ENCODE measurements at regions of chr10 and their contacts with region 1.

Region 1: GRCh38 chr10:52818019-52818418 is 45.4 kb upstream of the MBL2 start:
- DNase-seq: peak; percentile 64

Region 2: GRCh38 chr10:51960494-51960895 is 857.5 kb before region 1 on chr10:
- CTCF ChIA-PET with region 1: interaction called, 20 read pairs
- POLR2A ChIA-PET with region 1: interaction called, 3 read pairs
- DNase-seq: peak; percentile 43

Region 3: GRCh38 chr10:52215745-52216361 is 602.2 kb before region 1 on chr10:
- CTCF ChIA-PET with region 1: interaction called, 17 read pairs
- POLR2A ChIA-PET with region 1: no interaction called
- DNase-seq: peak; percentile 61

Region 4: GRCh38 chr10:52376694-52377354 is 441.2 kb before region 1 on chr10:
- CTCF ChIA-PET with region 1: no interaction called
- POLR2A ChIA-PET with region 1: no interaction called
- DNase-seq: no peak

Region 5: GRCh38 chr10:52488606-52489485 is 329.2 kb before region 1 on chr10:
- CTCF ChIA-PET with region 1: no interaction called
- POLR2A ChIA-PET with region 1: no interaction called
- DNase-seq: peak; percentile 42

Region 6: DNA sequence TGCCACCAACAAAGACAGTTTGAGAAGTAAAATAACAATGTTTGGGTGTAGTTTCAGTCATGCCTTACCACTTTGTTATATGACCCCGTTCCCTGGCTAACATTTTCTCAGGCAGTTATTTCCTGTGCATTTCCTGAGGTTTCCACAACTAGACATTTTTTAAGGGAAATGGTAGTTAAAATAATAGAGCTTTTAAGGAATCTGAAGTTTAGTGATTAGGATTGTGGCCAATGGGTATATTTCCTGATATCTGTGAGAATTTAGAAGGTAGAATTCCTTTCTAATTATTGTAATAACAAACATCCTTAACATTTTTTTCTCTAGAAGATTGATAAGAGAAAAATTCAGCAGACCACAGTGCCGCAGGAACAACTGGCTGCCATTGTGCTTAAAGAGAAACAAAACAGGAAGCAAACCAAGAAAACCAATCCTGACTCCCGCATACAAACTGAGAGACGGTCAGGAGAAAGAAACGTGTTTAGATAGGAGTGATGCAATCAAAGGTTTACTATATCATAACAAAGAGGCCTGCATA is 239.1 kb before region 1 on chr10:
- CTCF ChIA-PET with region 1: no interaction called
- POLR2A ChIA-PET with region 1: no interaction called
- DNase-seq: no peak

Region 7: DNA sequence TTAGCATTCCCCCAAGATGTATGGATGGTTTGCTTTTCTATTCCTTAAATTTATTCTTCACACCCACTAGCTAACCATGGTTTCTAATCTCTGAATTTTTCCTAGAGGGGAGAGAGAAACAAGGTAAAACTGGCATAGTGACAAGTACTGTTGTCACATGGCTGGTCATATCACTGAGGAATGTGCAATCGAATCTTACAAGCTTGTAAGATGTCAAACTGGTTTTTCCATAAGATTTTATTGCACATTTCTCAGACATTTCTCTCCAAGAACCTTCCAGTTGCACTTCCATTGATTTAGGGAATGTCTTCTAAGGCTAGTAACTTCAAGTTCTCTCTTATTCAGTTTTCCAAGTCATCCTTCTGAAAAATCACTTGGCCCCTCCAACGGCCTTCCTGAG is 135.2 kb before region 1 on chr10:
- CTCF ChIA-PET with region 1: no interaction called
- POLR2A ChIA-PET with region 1: no interaction called
- DNase-seq: no peak

Measured in HEK293T (cell line).